CD8-positive, alpha-beta T cell (primary cell): ENCODE measurements at regions of chr17 and their contacts with region 1.

Region 1: DNA sequence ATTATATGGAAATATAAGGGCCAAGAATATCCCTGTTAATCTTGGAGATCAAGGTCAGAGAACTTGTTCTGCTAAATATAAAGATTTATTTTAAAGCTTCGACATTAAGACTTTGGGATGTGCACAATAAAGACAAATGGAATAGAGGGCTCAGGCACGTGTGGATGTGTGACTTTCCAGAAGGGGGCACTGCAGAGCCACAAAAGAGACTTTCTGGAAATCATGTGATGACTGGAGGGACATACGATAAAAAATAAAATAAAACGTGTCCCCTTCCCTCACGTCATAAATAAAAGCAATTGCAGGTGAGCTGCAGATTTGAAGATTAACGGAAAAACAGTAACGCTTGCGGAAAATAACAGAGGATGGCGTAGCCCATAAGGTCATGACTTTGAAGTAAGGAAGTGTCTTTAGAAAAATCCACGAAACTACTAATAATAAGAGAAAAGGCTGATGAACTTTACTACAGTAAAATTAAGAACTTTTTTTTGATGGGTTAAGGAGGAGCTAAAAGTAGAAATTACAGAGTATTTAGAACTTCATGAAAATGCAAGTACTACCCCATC is 9.4 kb upstream of the ENGASE start:
- DNase-seq: peak; percentile 22 to 71 (median 57)
- ATAC-seq: peak; percentile 73
- H3K4me3 ChIP-seq: no peak overlapping the region
- H3K4me3 Mint-ChIP-seq: no peak overlapping the region
- H3K27ac ChIP-seq: no peak overlapping the region
- H3K27ac Mint-ChIP-seq: no peak overlapping the region
- H3K4me1 ChIP-seq: peaks cover 3% of the 10 kb centered on the region
- H3K4me1 Mint-ChIP-seq: peaks cover 3% of the 10 kb centered on the region
- H3K27me3 ChIP-seq: no peaks in the 10 kb centered on the region
- H3K27me3 Mint-ChIP-seq: no peaks in the 10 kb centered on the region
- CTCF ChIP-seq: peak; percentile 72

Region 2: DNA sequence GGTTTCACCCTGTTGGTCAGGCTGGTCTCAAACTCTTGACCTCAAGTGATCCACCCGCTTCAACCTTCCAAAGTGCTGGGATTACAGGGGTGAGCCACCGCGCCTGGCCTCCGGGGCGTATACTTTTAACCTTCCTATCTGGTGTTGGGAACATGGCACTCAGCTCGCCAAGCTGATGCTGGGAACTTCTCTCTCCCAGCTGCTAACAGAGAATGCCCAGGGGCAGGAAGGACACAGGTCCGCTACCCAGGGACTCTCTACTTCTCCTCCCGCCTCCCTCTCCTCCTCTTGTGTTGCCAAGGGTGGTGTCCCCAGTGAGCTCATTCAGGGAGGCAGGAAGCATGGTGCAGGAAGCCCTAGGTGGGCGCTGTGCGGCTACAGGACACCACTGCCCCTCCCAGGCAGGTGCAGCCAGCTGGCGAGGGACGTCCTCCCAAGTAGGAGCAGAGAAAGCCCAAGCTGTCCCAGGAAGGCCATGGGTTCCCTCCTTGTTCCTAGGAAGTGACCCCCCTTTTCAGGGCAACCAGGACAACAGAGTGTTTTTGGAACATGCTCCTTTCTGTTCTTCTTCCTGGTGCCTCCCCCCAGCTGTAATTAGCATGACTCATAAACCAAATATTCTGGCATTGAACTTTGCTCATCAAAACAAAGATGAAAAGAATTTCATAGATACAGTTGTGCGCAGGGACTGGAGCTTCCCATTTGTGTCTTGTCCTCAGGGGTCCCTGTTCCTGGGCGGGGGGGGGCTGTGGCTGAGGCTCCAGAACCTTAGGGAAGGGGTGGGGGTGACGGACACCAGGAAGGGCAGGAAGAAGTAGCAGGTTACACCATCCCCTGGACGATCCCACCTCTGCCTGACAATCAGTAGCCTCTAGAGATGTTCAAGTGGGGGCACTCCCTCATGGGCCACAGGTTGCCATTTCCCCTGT is 38.6 kb before region 1 on chr17:
- CTCF ChIA-PET with region 1: no interaction called
- POLR2A ChIA-PET with region 1: no interaction called
- intact Hi-C with region 1: no loop called
- DNase-seq: no peak
- ATAC-seq: no peak
- H3K4me3 ChIP-seq: no peak overlapping the region
- H3K4me3 Mint-ChIP-seq: no peak overlapping the region
- H3K27ac ChIP-seq: no peak overlapping the region
- H3K27ac Mint-ChIP-seq: no peak overlapping the region
- H3K4me1 ChIP-seq: peaks cover 8% of the 10 kb centered on the region
- H3K4me1 Mint-ChIP-seq: peaks cover 12% of the 10 kb centered on the region
- H3K27me3 ChIP-seq: peaks cover 0 to 3% of the 10 kb centered on the region in 2 experiments
- H3K27me3 Mint-ChIP-seq: peaks cover 24% of the 10 kb centered on the region
- CTCF ChIP-seq: no peak

Region 3: DNA sequence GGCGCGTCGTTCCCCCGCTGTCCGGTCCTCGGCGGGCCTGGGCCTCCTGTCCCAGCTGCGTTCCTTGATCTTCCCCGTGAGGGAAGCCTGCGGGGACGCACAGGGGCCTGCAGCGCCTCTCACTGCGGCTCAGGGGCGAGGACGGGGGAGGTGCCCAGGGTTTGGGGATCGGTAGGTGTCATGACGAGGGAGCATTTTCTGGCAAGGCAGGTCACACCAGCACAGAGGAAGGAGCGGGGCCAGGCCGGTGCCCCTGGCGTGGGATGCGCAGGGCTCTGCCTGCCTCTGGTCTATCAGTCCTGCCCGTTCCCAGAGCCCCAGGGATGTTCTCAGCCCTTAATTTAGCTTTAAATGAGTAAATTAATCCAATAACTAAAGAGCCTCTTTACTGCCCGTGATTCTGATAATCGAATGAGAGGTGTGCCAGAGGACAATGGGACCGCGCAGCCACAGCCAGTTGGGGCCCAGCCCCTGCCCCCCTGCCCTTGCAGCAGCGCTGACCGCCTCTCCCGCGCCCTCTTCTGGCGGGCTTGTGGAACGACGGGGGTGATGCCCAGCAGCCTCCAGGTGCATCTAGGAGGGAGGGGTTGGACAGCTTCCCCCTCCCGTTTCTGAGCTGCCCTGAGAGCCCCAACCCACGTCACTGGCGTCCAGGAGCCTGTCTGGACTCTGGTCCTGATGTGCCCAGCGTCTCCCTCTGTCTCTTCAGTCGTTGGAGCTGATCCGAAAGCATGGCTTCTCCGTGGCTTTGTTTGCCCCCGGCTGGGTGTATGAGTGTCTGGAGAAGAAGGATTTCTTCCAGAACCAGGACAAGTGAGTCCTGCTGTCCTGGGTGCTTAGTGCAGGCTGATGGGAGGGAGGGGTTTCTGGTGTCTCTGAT is 17.4 kb after region 1 on chr17:
- CTCF ChIA-PET with region 1: interaction called, 39 read pairs
- POLR2A ChIA-PET with region 1: no interaction called
- intact Hi-C with region 1: loop called (anchors 1 kb)
- DNase-seq: peak in 8 of 9 experiments; percentile 23 to 65 (median 56)
- ATAC-seq: peak; percentile 70
- H3K4me3 ChIP-seq: no peak overlapping the region
- H3K4me3 Mint-ChIP-seq: no peak overlapping the region
- H3K27ac ChIP-seq: no peak overlapping the region
- H3K27ac Mint-ChIP-seq: no peak overlapping the region
- H3K4me1 ChIP-seq: no peaks in the 10 kb centered on the region
- H3K4me1 Mint-ChIP-seq: peaks cover 2% of the 10 kb centered on the region
- H3K27me3 ChIP-seq: no peaks in the 10 kb centered on the region
- H3K27me3 Mint-ChIP-seq: no peaks in the 10 kb centered on the region
- CTCF ChIP-seq: peak; percentile 82